ENCODE measurements at regions of chr1 and their contacts with region 1.

Region 1: DNA sequence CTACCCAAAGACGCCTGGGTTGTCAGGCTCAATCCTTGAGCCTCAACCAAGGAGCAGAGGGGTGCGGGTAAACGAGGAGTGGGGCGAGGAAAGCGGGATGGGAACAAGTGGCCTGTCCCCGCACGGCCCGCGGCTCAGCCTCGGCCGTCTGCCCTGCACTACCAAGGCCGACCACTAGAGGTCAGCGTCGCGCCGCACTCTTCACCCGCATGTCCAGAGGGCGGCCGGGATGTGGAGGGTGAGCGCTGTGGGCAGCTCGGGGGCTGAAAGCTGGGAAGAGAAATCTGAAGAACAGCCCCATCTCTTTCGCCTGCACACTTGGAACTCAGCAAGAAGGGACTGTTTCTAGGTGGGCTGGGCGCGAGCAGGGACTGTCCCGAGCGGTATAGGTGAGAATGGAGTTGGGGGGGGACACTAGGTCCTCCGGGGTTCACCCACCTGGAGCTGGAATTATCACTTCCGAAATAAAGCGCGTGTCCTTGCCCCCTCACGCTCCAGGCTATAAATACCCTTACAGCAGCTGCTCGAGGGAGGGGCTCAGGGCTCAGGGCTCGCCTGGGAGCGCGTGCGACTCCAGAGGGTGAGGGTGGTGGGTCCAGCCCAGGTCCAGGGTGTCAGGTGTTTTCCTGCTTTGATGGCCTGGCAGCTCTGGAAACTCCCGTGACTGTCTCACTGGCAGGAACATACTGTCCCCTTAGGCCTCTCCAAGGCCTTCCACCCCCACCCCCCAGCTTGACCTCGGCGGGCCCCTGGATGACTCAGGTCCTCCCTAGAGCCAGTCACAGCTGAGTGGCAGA is 9.8 kb downstream of the SLC30A2 start:
- DNase-seq: peak; percentile 67 to 94 (median 86)

Region 2: DNA sequence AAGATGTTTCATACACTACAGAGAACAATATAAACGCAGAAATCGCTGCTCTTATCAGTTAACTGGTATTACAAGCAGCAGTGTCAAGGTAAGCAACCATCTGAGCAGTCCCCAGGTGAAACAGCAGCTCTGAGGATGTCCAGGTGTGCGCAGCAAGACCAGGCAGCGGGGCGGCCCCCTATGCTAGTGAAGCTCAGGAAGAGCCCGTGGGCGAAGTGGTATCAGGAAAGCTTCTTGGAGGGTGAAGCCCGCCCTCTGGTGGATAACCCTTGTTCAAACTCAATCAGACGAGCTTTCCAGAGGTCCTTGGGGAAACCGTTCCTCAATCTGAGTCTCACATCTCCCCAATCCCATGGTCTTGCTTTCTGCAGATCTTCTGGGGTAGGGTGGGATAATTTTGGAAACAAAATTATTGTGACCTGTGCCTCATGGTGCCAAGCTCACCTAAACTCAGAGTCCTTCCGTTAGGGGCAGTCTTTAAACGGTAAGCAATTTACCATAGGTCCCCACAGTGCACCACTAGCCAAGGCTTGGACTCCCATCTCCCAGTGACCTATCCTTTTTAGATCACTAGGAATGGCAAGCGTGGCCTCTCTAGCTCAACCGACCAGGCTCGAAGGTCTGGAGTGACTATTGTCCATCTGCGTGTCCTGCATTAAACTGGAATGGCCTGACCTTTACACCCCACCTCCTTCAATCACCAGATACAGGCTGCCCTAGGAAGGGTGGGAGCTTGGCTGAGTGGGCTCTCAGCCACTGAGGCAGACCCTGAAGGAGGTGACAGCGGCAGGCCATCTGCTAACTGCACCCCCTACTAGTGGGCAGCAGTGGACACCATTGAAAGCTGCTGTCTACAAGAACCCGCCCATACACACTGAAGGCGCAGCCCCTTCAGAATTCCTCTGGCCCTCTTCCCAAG is 109.1 kb after region 1 on chr1:
- intact Hi-C with region 1: loop called (anchors 5 kb)
- DNase-seq: peak; percentile 66 to 96 (median 87)

Measured in head of caudate nucleus (tissue), 42 donors.